ENCODE measurements at regions of chr5 and their contacts with region 1.

Region 1: DNA sequence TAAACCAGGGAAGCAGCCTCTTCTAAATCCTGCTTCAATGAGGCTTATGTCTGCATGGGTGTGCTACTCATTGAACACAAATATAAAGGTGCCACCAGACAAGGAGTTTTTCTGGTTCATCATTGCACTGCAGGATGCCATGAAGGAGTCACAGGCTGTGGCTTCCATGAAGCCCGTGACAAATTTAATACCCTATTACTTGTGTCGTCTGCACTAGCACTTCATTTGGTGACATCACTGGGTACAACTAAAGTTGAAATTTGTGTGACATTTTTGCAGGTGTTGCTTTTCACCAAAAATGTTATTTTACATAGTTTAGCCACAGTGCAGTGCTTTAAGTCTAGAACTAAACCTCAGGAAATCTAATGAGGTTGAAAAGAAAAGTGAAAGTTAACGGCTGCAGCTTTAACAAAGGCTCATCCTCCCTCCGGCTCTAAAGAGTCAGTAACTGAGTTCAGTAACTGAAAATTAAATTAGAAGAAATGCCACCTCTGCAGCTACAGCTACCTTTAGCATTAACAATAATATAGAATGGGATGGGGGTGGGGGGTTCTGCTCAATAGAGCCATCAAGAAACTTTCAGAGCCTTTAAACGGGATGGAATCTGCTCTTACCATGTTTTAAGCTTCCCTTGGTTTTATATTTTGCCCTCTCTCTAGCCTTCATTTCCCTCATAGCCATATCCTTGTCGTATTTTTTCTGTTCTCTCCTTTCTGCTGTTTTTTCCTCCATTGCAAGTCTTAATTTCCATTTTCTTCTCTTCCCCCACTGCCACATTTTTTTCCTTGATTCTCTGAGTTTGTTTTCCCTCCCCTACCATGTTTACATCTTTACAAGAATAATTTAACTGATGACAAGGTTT is 233.8 kb upstream of the TMEM161B start:
- DNase-seq: peak in 5 of 9 donors; percentile 30 to 41 (median 33)
- ATAC-seq: peak; percentile 81
- H3K4me3 ChIP-seq: peak overlapping the region; percentile 74
- H3K4me3 Mint-ChIP-seq: peak overlapping the region; percentile 89 to 100 (median 95)
- H3K27ac ChIP-seq: peak overlapping the region; percentile 70
- H3K27ac Mint-ChIP-seq: peak overlapping the region; percentile 84 to 98 (median 95)
- H3K4me1 ChIP-seq: no peaks in the 10 kb centered on the region
- H3K4me1 Mint-ChIP-seq: peaks cover 7 to 23% (median 17%) of the 10 kb centered on the region in 7 donors
- H3K27me3 ChIP-seq: no peaks in the 10 kb centered on the region
- H3K27me3 Mint-ChIP-seq: peaks cover 0 to 14% (median 6%) of the 10 kb centered on the region in 5 donors

Region 2: GRCh38 chr5:86617756-86618576 is 1884.4 kb before region 1 on chr5 and contains the start of gene COX7C:
- CTCF ChIA-PET with region 1: no interaction called
- POLR2A ChIA-PET with region 1: no interaction called
- intact Hi-C with region 1: loop called in 1 of 2 experiments (anchors 2 kb)
- DNase-seq: peak; percentile 67 to 97 (median 96)
- ATAC-seq: peak; percentile 97
- H3K4me3 ChIP-seq: peak within 1 kb of the TSS; percentile 95
- H3K4me3 Mint-ChIP-seq: peak within 1 kb of the TSS; percentile 96 to 100 (median 100)
- H3K27ac ChIP-seq: peak within 1 kb of the TSS; percentile 96
- H3K27ac Mint-ChIP-seq: peak within 1 kb of the TSS; percentile 98 to 100 (median 100)
- H3K4me1 ChIP-seq: peaks cover 7 to 12% of the 10 kb centered on the region in 2 donors
- H3K4me1 Mint-ChIP-seq: peaks cover 5 to 46% (median 32%) of the 10 kb centered on the region in 7 donors
- H3K27me3 ChIP-seq: no peaks in the 10 kb centered on the region
- H3K27me3 Mint-ChIP-seq: peaks cover 8 to 14% (median 9%) of the 10 kb centered on the region in 5 donors
- total RNA-seq, gene COX7C: 393 to 571 (median 547) TPM

Region 3: DNA sequence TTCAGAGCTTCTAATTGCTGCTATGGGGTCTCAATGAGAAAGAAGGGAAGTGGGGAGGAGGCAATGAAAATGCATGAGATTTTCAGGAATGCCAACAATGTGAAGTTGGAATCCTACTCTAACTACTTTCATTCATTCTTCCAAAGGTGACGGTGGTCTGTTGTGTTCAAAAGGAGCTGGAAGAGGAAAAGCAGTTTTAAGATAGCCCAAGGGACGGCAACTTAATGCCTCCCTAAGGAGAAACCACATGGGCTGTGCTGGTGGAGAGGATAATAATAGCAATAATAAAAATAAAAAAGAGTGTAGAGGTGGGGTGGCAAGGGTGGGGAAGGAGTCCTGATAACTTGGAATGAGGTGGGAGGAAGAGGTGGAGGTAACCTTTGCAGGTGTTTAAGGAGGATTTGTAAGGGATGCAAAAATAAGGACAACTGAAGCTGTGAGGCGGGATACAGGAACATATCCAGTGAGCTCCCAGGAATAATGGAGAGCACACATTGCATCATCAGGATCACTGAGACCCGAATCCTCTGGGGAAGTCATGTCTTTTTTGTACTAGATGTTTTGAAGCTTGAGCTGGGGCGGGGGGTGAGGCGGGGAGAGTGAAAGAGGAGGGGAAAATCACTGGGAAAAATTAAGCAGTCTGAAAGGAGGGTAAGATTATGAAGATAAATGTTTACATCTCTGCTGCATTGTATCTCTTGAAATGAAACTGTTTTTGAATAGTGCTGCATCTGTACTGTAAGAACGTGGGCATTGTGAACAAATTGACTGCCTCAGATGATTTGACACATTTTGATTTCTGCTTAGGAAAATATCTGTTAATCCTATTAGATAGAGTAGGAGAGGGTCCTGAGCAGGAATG is 113.7 kb before region 1 on chr5:
- CTCF ChIA-PET with region 1: no interaction called
- POLR2A ChIA-PET with region 1: no interaction called
- intact Hi-C with region 1: no loop called
- DNase-seq: no peak
- ATAC-seq: no peak
- H3K4me3 ChIP-seq: no peak overlapping the region
- H3K4me3 Mint-ChIP-seq: no peak overlapping the region
- H3K27ac ChIP-seq: no peak overlapping the region
- H3K27ac Mint-ChIP-seq: peak overlapping the region in 1 of 9 donors; percentile 36
- H3K4me1 ChIP-seq: no peaks in the 10 kb centered on the region
- H3K4me1 Mint-ChIP-seq: no peaks in the 10 kb centered on the region
- H3K27me3 ChIP-seq: no peaks in the 10 kb centered on the region
- H3K27me3 Mint-ChIP-seq: peaks cover 0 to 36% (median 28%) of the 10 kb centered on the region in 5 donors

Region 4: DNA sequence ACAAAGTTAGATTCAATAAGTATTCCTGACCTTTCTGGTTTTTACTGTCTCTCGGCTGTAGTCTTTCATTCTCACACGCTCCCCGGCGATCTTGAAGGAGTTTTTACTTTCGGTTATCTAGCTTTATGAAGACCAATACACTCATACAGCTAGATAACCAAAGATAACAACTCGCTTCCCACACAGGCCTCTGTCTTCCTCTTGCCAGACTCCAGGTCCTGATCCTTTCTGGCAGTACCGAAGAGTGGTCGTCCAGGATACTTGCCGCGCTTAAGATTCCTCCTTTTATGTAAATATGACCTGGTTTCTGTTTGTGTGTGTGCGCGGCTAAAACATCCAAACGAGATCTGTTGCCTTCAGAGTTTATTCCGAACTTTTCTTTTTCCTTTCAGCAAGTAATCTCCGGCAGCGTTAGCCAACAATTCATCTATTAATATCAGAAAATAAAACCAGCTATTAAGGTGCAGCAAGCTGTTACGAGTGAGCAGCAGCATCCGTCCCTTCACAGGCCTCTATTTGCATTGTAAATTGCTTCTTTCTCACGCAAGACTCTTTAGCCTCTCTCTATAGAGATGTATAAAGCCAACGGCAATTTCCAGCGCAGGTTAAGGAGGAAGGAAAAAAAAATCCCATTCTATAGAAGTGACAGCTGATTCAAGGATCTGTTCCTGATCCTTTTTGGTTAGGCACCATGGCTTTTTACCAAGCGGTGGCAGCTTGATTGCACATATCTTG is 164.5 kb after region 1 on chr5:
- CTCF ChIA-PET with region 1: no interaction called
- POLR2A ChIA-PET with region 1: no interaction called
- intact Hi-C with region 1: loop called in 1 of 2 experiments (anchors 5 kb)
- DNase-seq: no peak
- ATAC-seq: no peak
- H3K4me3 ChIP-seq: peak overlapping the region; percentile 45
- H3K4me3 Mint-ChIP-seq: peak overlapping the region; percentile 75 to 88 (median 86)
- H3K27ac ChIP-seq: no peak overlapping the region
- H3K27ac Mint-ChIP-seq: peak overlapping the region in 3 of 9 donors; percentile 0 to 6 (median 3)
- H3K4me1 ChIP-seq: peaks cover 7 to 8% of the 10 kb centered on the region in 2 donors
- H3K4me1 Mint-ChIP-seq: peaks cover 11 to 34% (median 25%) of the 10 kb centered on the region in 7 donors
- H3K27me3 ChIP-seq: peaks cover 12 to 29% of the 10 kb centered on the region in 2 donors
- H3K27me3 Mint-ChIP-seq: peaks cover 92 to 98% (median 93%) of the 10 kb centered on the region in 5 donors

Region 5: DNA sequence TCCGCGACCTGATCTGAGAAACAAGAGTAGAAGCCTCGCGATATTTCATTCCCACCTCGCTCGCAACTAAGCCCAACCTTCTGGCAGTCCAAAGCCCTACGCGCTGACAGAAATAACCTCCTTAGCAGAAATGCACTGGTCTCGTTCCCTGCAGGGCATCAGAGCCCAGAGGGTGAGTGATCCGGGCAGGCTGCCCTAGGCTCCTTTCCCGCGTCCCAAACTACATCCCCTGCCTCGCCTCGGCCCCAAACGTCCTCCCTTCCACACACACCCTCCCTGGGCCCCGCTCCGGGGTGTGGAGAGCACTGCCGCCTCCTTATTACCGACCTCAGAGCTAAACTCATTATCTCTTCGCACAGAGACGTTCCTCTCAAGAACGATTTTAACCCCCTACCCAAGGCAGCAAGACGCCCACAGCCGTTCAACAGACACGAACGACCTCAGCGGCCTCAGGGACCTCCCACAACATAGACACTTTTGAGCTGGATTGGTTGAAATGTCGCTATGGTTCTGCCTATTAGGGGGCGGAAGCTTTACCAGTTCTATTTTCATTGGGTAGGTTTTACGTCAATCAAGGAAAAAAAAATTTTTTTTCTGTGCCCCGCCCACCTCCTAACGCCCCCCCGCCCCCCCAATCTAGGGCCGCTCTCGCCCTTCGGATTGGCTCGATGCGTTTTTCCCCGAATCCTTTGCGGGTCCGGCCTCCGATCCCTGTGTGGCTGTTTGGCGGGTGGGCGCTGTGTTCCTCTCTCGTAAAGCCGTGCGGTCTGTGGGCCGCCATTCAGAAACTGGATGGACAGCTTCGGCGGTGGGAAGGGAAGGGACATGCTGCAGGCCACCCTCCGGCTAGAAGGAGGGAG is 1907.1 kb after region 1 on chr5 and contains the start of gene CETN3:
- CTCF ChIA-PET with region 1: no interaction called
- POLR2A ChIA-PET with region 1: no interaction called
- intact Hi-C with region 1: loop called in 1 of 2 experiments (anchors 10 kb)
- DNase-seq: peak; percentile 72 to 93 (median 88)
- ATAC-seq: peak; percentile 94
- H3K4me3 ChIP-seq: peak within 1 kb of the TSS; percentile 100
- H3K4me3 Mint-ChIP-seq: no peak within 1 kb of the TSS
- H3K27ac ChIP-seq: peak within 1 kb of the TSS; percentile 93
- H3K27ac Mint-ChIP-seq: no peak within 1 kb of the TSS
- H3K4me1 ChIP-seq: peaks cover 7 to 13% of the 10 kb centered on the region in 2 donors
- H3K4me1 Mint-ChIP-seq: peaks cover 12 to 26% (median 16%) of the 10 kb centered on the region in 7 donors
- H3K27me3 ChIP-seq: no peaks in the 10 kb centered on the region
- H3K27me3 Mint-ChIP-seq: peaks cover 0 to 4% (median 0%) of the 10 kb centered on the region in 5 donors
- total RNA-seq, gene CETN3: 4.4 to 31.0 (median 22.1) TPM